CD8-positive, alpha-beta memory T cell (primary cell): ENCODE measurements at regions of chr11 and their contacts with region 1.

Region 1: DNA sequence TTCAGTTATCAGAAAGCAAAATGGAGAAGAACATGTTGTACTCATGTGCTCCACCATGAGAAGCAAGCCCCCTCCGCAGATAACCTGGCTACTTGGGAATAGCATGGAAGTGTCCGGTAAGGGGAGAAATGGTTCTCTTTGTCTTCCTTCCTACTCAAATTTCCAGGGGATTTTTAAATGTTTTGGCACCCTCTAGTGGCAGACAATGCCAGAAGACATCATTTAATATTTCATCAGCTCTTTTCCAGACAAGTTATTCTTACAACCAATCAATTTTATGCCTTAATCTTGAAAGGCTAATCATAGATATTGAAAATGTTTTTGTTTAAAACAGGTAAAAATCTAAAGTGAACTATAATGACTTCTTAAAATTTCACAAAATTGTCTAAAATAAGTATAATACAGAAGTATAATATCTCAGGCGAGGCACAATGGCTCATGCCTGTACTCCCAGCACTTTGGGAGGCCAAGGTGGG is 15.7 kb downstream of the CRTAM start:
- DNase-seq: peak in 4 of 5 donors; percentile 30 to 72 (median 61)
- H3K4me3 ChIP-seq: no peak overlapping the region
- H3K4me3 Mint-ChIP-seq: no peak overlapping the region
- H3K27ac ChIP-seq: no peak overlapping the region
- H3K27ac Mint-ChIP-seq: peak overlapping the region in 6 of 8 donors; percentile 32 to 75 (median 52)
- H3K4me1 ChIP-seq: peaks cover 51% of the 10 kb centered on the region
- H3K4me1 Mint-ChIP-seq: peaks cover 51 to 64% (median 62%) of the 10 kb centered on the region in 3 donors
- H3K27me3 ChIP-seq: no peaks in the 10 kb centered on the region
- H3K27me3 Mint-ChIP-seq: no peaks in the 10 kb centered on the region

Region 2: DNA sequence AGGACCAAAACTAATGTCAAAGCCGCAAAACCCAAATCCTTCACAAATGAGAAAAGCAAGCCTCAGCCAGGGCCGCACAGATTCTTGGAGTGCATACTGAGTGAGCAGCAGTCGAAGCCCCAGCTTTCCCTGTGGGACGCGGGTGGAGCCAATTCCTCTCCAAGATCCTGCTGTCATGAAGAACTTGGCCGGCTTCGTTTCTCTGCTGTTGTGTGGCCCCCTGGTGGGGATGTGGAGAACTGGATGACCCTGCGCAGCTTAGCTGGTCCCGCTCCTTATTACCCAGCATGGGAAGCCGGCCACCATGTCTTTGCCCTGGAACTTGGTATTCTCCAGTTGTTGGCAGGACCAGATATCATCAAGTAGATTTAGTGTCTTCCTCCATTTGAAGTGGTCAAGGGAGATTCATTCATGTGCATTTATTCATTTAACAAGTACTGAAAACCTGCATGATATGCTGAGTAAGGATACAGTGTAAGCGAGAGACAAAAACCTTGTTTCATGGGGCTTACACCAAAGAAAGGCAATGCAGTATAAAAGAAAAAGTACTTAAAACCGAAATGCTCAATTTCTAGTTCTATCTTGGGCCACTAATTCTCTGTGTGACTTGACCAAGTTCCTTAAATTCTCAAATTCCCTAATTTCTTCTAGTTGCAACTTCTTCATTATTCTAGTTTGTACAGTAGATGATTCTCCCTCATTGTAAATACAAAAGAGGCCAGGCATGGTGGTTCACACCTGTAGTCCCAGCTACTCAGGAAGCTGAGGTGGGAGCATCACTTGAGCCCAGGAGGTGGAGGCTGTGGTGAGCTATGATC is 72.4 kb before region 1 on chr11:
- CTCF ChIA-PET with region 1: interaction called, 32 read pairs
- POLR2A ChIA-PET with region 1: no interaction called
- DNase-seq: peak; percentile 51 to 78 (median 56)
- H3K4me3 ChIP-seq: no peak overlapping the region
- H3K4me3 Mint-ChIP-seq: no peak overlapping the region
- H3K27ac ChIP-seq: no peak overlapping the region
- H3K27ac Mint-ChIP-seq: peak overlapping the region in 2 of 8 donors; percentile 29 to 60
- H3K4me1 ChIP-seq: no peaks in the 10 kb centered on the region
- H3K4me1 Mint-ChIP-seq: peaks cover 5 to 7% (median 6%) of the 10 kb centered on the region in 3 donors
- H3K27me3 ChIP-seq: no peaks in the 10 kb centered on the region
- H3K27me3 Mint-ChIP-seq: peaks cover 0 to 3% of the 10 kb centered on the region in 2 donors

Region 3: GRCh38 chr11:122814401-122814800 is 39.6 kb before region 1 on chr11:
- CTCF ChIA-PET with region 1: interaction called, 116 read pairs
- POLR2A ChIA-PET with region 1: interaction called, 7 read pairs
- DNase-seq: no peak
- H3K4me3 ChIP-seq: no peak overlapping the region
- H3K4me3 Mint-ChIP-seq: no peak overlapping the region
- H3K27ac ChIP-seq: no peak overlapping the region
- H3K27ac Mint-ChIP-seq: peak overlapping the region in 1 of 8 donors; percentile 29
- H3K4me1 ChIP-seq: peaks cover 8% of the 10 kb centered on the region
- H3K4me1 Mint-ChIP-seq: peaks cover 18 to 29% (median 22%) of the 10 kb centered on the region in 3 donors
- H3K27me3 ChIP-seq: no peaks in the 10 kb centered on the region
- H3K27me3 Mint-ChIP-seq: no peaks in the 10 kb centered on the region

Region 4: DNA sequence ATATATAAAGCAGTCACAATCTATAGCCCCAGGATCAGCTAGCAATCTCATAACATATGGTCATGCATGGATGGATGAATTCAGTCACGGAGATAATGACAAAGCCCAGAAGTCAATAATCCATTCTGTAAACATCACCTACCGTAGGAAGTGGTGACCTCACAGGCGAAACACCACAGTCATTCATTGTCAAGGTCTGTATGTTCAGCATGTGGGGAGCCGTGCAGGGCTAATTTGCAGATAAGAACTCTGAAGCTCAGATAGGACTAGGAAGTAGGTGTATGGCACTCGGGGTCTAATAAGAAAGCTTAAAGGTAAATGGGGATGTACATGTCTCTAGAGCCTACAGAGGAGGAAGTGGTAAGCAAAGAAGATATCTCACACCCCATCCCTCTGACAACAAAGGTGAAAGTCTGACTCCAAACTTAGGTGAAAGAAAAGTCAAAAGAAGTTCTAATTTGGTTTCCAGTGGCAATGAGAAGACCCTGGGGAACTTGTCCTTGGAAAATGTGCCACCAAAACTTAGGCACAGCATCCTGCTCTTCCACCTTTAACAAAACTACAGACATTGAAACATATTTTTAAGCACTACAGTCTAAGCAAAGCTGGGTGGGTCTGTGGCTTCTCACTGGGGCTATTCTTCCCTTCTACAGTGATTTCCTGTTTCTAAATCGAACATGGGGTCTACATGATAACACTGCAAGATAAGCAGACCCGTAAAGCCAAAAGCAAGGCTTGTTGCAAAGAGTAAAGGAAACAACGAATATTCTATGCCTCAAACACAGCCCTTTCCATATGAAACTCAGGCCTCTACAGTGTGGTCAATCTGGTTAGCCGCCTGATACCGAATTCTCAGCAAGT is 10.5 kb before region 1 on chr11:
- CTCF ChIA-PET with region 1: interaction called, 166 read pairs
- POLR2A ChIA-PET with region 1: interaction called, 99 read pairs
- DNase-seq: peak; percentile 45 to 88 (median 76)
- H3K4me3 ChIP-seq: peak overlapping the region; percentile 34
- H3K4me3 Mint-ChIP-seq: peak overlapping the region; percentile 57 to 81 (median 73)
- H3K27ac ChIP-seq: peak overlapping the region; percentile 74
- H3K27ac Mint-ChIP-seq: peak overlapping the region; percentile 90 to 96 (median 94)
- H3K4me1 ChIP-seq: peaks cover 76% of the 10 kb centered on the region
- H3K4me1 Mint-ChIP-seq: peaks cover 81 to 85% (median 85%) of the 10 kb centered on the region in 3 donors
- H3K27me3 ChIP-seq: no peaks in the 10 kb centered on the region
- H3K27me3 Mint-ChIP-seq: no peaks in the 10 kb centered on the region